ENCODE measurements at regions of chr15 and their contacts with region 1.

Region 1: GRCh38 chr15:74584779-74585178 is 30.9 kb upstream of the CLK3 start:
- DNase-seq: no peak
- ATAC-seq: no peak
- H3K4me3 ChIP-seq: no peak overlapping the region
- H3K27ac ChIP-seq: no peak overlapping the region
- H3K4me1 ChIP-seq: no peaks in the 10 kb centered on the region
- H3K27me3 ChIP-seq: no peaks in the 10 kb centered on the region
- CTCF ChIP-seq: no peak

Region 2: DNA sequence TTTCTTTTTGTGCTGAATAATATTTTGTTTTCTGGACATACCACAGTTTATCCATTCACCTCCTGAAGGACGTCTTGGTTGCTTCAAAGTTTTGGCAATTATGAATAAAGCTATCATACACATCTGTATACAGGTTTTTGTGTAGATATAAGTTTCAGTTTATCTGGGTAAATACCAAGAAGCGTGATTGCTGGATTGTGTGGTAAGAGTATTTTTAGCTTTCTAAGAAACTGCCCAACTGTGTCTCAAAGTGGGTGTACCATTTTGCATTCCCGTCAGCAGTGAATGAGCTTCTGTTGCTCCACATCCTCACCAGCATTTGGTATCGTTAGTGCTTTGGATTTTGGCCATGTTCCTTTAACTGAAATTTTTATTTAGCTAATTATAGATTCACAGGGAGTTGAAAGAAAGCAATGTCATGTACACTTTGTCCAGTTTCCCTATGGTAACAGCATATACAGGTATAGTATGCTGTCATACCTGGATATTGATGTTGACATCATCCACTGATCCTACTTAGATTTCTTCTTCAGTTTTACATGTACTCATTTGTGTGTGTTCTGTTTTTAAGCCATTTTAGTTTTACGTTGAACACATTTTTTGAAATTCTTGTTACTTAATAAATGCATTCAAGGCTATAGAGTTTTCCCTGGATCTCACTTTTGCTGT is 31.9 kb before region 1 on chr15:
- intact Hi-C with region 1: loop called in 1 of 2 experiments (anchors 5 kb)
- DNase-seq: no peak
- ATAC-seq: no peak
- H3K4me3 ChIP-seq: no peak overlapping the region
- H3K27ac ChIP-seq: no peak overlapping the region
- H3K4me1 ChIP-seq: no peaks in the 10 kb centered on the region
- H3K27me3 ChIP-seq: no peaks in the 10 kb centered on the region
- CTCF ChIP-seq: no peak